ENCODE measurements at regions of chr5 and their contacts with region 1.

Region 1: GRCh38 chr5:127892467-127893207 is 189.4 kb downstream of the CCDC192 start:
- H3K4me3 Mint-ChIP-seq: no peak overlapping the region
- H3K27ac Mint-ChIP-seq: no peak overlapping the region
- H3K4me1 Mint-ChIP-seq: no peaks in the 10 kb centered on the region
- H3K27me3 Mint-ChIP-seq: no peaks in the 10 kb centered on the region

Region 2: GRCh38 chr5:128174951-128175350 is 282.3 kb after region 1 on chr5:
- intact Hi-C with region 1: loop called (anchors 10 kb)
- H3K4me3 Mint-ChIP-seq: no peak overlapping the region
- H3K27ac Mint-ChIP-seq: no peak overlapping the region
- H3K4me1 Mint-ChIP-seq: no peaks in the 10 kb centered on the region
- H3K27me3 Mint-ChIP-seq: no peaks in the 10 kb centered on the region

Measured in dendritic cell treated with granulocyte-macrophage colony-stimulating factor and Interleukin-4, amounts not matched to agents 40 ng/mL and 50 ng/mL, for 4 days (primary cell).